HEK293 (cell line): ENCODE measurements at regions of chr5 and their contacts with region 1.

Region 1: DNA sequence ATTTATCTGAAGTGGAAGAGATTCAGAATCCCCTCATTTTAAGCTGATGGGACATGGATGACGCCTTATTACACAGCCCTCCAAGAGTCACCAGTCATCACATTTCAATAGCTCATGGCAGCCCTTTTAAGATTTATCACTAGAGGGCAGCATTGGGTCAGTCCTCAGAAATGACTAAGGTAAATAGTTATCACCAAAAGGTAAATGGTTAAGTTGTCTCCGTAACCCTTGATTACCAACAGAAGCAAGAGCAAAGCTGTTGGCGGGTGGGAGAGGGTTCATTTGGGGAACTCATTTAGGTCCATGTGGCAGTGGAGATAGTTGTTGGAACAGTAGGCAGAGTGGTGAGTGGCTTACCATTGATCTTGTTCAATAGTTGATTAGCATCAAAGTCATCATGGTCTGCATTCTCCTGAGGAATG is 12.0 kb upstream of the C9 start:
- H3K4me3 ChIP-seq: no peak overlapping the region
- H3K27ac ChIP-seq: no peak overlapping the region
- H3K4me1 ChIP-seq: no peaks in the 10 kb centered on the region
- CTCF ChIP-seq: peak; percentile 64

Region 2: GRCh38 chr5:39387293-39387692 is 11.0 kb after region 1 on chr5:
- CTCF ChIA-PET with region 1: interaction called, 12 read pairs
- POLR2A ChIA-PET with region 1: no interaction called
- H3K4me3 ChIP-seq: no peak overlapping the region
- H3K27ac ChIP-seq: no peak overlapping the region
- H3K4me1 ChIP-seq: no peaks in the 10 kb centered on the region
- CTCF ChIP-seq: no peak

Region 3: GRCh38 chr5:39424736-39425637 is 48.7 kb after region 1 on chr5 and contains the start of gene DAB2:
- CTCF ChIA-PET with region 1: interaction called, 11 read pairs
- POLR2A ChIA-PET with region 1: interaction called, 6 read pairs
- H3K4me3 ChIP-seq: peak within 1 kb of the TSS; percentile 64
- H3K27ac ChIP-seq: peak within 1 kb of the TSS; percentile 74
- H3K4me1 ChIP-seq: peaks cover 9% of the 10 kb centered on the region; the same call in 1 of the 2 replicates
- CTCF ChIP-seq: peak; percentile 97

Region 4: DNA sequence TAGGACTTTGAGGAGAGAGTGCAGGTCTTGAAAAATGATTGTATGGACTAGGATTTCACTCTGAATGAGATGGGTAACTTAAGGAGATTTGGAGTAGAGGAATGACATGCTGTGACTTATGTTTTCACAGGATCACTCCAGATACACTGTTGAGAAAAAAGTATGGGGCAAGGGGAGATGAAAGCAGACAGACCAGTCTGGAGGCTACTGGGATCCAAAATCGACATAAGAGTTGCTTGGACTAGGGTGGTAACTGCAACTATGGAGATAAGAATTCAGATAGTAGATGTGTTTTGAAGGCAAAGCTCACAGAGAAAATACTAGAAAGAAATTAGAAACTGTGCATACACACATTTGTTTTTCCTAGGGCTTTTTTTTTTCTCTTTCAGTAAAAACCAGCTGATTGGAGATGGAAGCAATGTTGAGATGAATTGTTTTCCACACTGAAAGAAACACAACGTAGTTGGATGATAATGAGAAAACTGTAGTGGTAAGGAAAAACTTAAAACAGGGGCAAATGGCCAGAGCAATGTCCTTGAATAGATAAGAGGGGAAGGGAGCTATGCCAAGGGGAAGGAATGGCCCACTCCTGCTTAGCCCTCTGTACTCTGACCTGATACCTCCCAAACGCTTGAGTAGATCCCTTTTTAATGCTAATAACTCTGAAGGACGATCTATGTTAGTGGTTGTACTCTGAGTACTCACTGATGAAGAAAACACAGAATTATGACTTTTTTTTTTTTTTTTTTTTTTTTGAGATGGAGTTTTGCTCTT is 163.0 kb after region 1 on chr5:
- CTCF ChIA-PET with region 1: interaction called, 77 read pairs
- POLR2A ChIA-PET with region 1: no interaction called
- H3K4me3 ChIP-seq: no peak overlapping the region
- H3K27ac ChIP-seq: no peak overlapping the region
- H3K4me1 ChIP-seq: no peaks in the 10 kb centered on the region
- CTCF ChIP-seq: no peak

Region 5: DNA sequence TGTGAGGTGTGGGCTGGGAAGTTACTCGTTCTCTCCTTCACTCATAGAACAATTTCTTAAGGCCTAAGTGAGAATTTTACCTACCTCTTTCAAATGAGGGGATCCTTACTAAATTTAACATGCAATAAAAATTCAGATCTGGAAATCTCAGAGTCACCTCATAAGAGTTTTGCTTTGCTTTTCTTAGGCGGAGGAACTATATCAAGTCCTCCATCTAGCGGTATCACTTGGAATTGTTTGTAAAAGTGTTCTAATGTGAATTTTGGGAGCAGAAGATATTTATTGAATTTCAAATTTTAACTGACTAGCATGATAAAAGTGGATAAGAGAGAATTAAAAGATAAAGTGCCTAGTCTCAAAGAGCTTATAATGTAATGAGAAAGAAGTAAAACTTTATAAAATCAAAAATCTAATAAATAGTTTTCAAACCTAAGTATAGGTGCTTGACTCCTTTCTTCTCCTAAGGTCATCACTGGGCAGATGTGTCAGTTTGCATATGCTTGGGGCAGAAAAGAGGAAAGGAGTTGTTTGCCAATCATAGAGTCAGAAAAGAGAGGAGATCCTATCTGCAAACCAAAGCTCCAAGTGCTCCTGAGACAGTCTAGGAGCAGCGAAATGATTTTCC is 194.2 kb after region 1 on chr5:
- CTCF ChIA-PET with region 1: interaction called, 69 read pairs
- POLR2A ChIA-PET with region 1: no interaction called
- H3K4me3 ChIP-seq: no peak overlapping the region
- H3K27ac ChIP-seq: no peak overlapping the region
- H3K4me1 ChIP-seq: no peaks in the 10 kb centered on the region
- CTCF ChIP-seq: no peak

Region 6: DNA sequence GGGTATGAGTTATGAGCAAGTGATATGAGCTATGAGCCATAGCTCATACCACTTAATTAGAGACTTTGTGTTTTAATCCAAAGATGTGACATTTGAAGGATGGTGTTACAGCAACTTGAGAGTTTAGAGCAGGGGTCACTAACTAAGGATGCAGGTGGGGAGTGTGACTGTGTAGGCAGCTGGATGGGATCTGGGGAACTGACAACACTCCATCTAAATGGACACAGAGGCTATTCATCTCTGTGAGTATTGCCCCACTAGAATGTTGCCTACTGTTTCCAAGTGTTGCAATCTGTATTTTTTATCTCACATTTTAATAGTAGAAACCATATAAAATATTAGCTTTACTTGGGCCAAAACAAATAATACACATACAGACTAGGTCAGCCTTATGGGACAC is 536.6 kb after region 1 on chr5:
- CTCF ChIA-PET with region 1: no interaction called
- POLR2A ChIA-PET with region 1: no interaction called
- H3K4me3 ChIP-seq: no peak overlapping the region
- H3K27ac ChIP-seq: no peak overlapping the region
- H3K4me1 ChIP-seq: no peaks in the 10 kb centered on the region
- CTCF ChIP-seq: no peak